ENCODE measurements at regions of chr22 and their contacts with region 1.

Region 1: GRCh38 chr22:36331306-36331911 is 56.4 kb downstream of the MYH9 start:
- DNase-seq: peak; percentile 96 to 100
- H3K4me3 ChIP-seq: peak overlapping the region; percentile 42; the same call in 1 of the 2 replicates
- H3K27ac ChIP-seq: peak overlapping the region; percentile 96
- H3K4me1 ChIP-seq: peaks cover 83% of the 10 kb centered on the region
- H3K27me3 ChIP-seq: no peaks in the 10 kb centered on the region
- CTCF ChIP-seq: no peak

Region 2: GRCh38 chr22:36350751-36351594 is 19.6 kb after region 1 on chr22:
- CTCF ChIA-PET with region 1: no interaction called
- POLR2A ChIA-PET with region 1: interaction called, 6 read pairs
- intact Hi-C with region 1: loop called (anchors 1 kb)
- DNase-seq: no peak
- H3K4me3 ChIP-seq: no peak overlapping the region
- H3K27ac ChIP-seq: peak overlapping the region; percentile 25
- H3K4me1 ChIP-seq: peaks cover 22% of the 10 kb centered on the region
- H3K27me3 ChIP-seq: no peaks in the 10 kb centered on the region
- CTCF ChIP-seq: no peak

Region 3: DNA sequence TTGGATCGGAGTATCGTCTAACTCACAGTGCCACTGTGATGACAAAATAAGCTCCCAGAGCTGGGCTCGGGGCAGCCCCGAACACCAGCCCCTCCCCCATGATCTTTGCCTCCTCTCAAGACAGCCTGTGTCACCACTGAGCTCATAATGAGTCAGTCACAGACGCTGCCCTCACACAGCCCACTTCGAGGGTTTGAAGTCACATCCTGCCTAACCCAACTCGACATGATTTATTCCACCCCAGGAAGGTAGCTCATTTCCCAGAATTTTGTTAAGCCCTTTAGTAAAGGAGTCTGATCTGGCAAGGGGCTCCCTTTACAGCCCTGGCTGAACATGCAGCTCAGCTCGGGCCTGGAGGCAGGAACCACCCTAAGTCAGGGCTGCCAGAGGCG is 33.6 kb after region 1 on chr22:
- CTCF ChIA-PET with region 1: interaction called, 5 read pairs
- POLR2A ChIA-PET with region 1: interaction called, 21 read pairs
- intact Hi-C with region 1: loop called (anchors 1 kb)
- DNase-seq: peak; percentile 74 to 87
- H3K4me3 ChIP-seq: no peak overlapping the region
- H3K27ac ChIP-seq: peak overlapping the region; percentile 53
- H3K4me1 ChIP-seq: peaks cover 99% of the 10 kb centered on the region
- H3K27me3 ChIP-seq: no peaks in the 10 kb centered on the region
- CTCF ChIP-seq: no peak

Region 4: DNA sequence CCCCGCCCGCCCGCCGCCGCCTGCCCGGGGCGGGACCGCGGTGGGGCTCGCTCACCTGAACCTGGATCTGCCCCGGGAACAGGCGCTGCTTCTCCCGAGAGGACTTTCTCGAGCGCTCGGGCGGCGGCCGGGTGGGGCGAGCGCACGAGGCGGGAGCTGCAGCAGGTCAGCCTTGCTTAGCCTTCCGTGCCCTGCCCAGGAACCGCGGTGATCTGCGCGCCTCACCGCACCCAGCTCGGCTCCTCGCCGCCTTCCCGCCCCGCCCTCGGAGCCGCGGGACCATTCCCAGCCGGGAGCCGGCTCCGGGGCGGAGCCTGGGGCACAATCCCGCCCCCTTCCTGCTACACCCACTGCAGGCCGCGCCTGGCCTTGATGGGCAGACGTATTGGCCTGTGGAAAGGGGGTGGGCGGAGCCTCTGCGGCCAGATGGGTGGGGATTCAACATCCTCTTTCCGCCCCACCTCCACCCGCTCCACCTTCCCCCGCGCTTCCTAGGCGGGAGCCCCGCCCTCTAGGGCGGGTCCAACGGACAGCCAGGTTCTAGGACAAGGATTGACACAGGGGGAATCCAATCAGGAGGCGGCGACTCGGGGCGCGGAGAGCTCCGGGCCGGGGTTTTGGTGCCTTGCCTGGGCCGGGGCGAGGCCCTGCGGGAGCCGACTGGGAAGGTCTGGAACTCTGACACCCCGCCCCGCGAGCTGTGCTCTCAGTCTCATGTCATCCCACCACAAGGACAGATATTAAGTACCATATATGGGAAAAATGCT is 56.5 kb after region 1 on chr22 and contains the start of gene MYH9:
- CTCF ChIA-PET with region 1: no interaction called
- POLR2A ChIA-PET with region 1: interaction called, 15 read pairs
- intact Hi-C with region 1: loop called (anchors 1 kb)
- DNase-seq: peak; percentile 98 to 100
- H3K4me3 ChIP-seq: peak within 1 kb of the TSS; percentile 96
- H3K27ac ChIP-seq: peak within 1 kb of the TSS; percentile 79
- H3K4me1 ChIP-seq: peaks cover 34% of the 10 kb centered on the region
- H3K27me3 ChIP-seq: no peaks in the 10 kb centered on the region
- CTCF ChIP-seq: no peak
- total RNA-seq, gene MYH9: 758 and 776 TPM in 2 replicates

Region 5: GRCh38 chr22:36461669-36462649 is 130.6 kb after region 1 on chr22:
- CTCF ChIA-PET with region 1: no interaction called
- POLR2A ChIA-PET with region 1: interaction called, 7 read pairs
- intact Hi-C with region 1: loop called (anchors 1 kb)
- DNase-seq: peak; percentile 96 to 99
- H3K4me3 ChIP-seq: no peak overlapping the region
- H3K27ac ChIP-seq: peak overlapping the region; percentile 72
- H3K4me1 ChIP-seq: peaks cover 92% of the 10 kb centered on the region
- H3K27me3 ChIP-seq: no peaks in the 10 kb centered on the region
- CTCF ChIP-seq: no peak

Region 6: GRCh38 chr22:36478966-36479365 is 147.6 kb after region 1 on chr22:
- CTCF ChIA-PET with region 1: no interaction called
- POLR2A ChIA-PET with region 1: no interaction called
- intact Hi-C with region 1: no loop called
- DNase-seq: no peak
- H3K4me3 ChIP-seq: no peak overlapping the region
- H3K27ac ChIP-seq: no peak overlapping the region
- H3K4me1 ChIP-seq: peaks cover 20% of the 10 kb centered on the region
- H3K27me3 ChIP-seq: no peaks in the 10 kb centered on the region
- CTCF ChIP-seq: no peak

Region 7: GRCh38 chr22:37734964-37735451 is 1403.6 kb after region 1 on chr22:
- CTCF ChIA-PET with region 1: no interaction called
- POLR2A ChIA-PET with region 1: interaction called, 18 read pairs
- intact Hi-C with region 1: no loop called
- DNase-seq: peak; percentile 64 to 68
- H3K4me3 ChIP-seq: no peak overlapping the region
- H3K27ac ChIP-seq: no peak overlapping the region
- H3K4me1 ChIP-seq: no peaks in the 10 kb centered on the region
- H3K27me3 ChIP-seq: no peaks in the 10 kb centered on the region
- CTCF ChIP-seq: peak; percentile 77

Measured in PC-9 (cell line).